ENCODE measurements at regions of chr10 and their contacts with region 1.

Region 1: DNA sequence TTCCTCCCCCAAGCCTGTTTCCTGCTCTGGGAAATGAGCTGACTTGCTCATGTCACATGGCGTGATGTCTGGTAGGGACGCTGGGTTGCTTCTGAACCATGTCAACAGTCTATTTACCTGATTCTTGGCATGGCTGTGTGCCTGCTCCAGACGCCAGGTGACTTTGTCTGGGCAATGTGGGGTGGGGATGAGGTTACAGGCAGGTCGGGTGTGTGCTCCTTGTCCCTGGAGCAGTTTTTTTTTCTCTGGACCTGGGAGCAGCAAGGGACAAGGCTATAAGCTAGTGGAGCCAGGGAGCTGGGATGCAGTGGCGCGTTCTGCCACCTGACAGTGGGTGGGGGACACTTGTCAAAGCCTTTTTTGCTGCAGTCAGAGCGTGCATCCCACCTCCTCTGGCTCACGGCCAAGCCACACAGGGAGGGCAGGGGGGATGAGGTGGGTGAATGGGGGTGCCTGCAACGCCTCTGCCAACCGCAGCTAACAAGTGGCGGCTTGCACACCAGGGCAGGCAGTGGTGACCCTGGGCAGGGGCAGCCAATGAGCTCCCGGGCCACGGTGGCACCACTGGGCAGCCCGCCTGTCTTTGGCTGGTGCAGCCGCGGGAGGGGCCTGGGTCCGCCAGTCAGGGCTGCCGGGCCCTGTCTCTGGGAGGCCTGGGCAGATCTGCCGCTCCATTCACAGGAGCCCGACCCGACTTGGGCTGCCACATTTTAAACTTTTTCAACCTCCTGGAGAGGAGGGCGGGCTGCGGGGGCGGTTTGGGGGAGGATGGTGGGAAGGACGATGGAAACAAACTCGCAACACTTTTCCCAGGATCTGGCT is 22.9 kb downstream of the DNAJB12 start:
- DNase-seq: peak; percentile 77 to 95 (median 85)
- ATAC-seq: peak; percentile 65
- H3K4me3 ChIP-seq: peak overlapping the region; percentile 24
- H3K4me3 Mint-ChIP-seq: peak overlapping the region; percentile 76
- H3K27ac ChIP-seq: peak overlapping the region; percentile 30 to 71
- H3K27ac Mint-ChIP-seq: peak overlapping the region; percentile 94
- H3K4me1 ChIP-seq: peaks cover 100% of the 10 kb centered on the region
- H3K4me1 Mint-ChIP-seq: peaks cover 91% of the 10 kb centered on the region
- H3K27me3 ChIP-seq: no peaks in the 10 kb centered on the region
- H3K27me3 Mint-ChIP-seq: no peaks in the 10 kb centered on the region
- CTCF ChIP-seq: peak; percentile 12

Region 2: GRCh38 chr10:71957546-71958275 is 374.1 kb before region 1 on chr10:
- CTCF ChIA-PET with region 1: no interaction called
- POLR2A ChIA-PET with region 1: no interaction called
- intact Hi-C with region 1: loop called in 1 of 2 experiments (anchors 5 kb)
- DNase-seq: no peak
- ATAC-seq: no peak
- H3K4me3 ChIP-seq: no peak overlapping the region
- H3K4me3 Mint-ChIP-seq: no peak overlapping the region
- H3K27ac ChIP-seq: no peak overlapping the region
- H3K27ac Mint-ChIP-seq: no peak overlapping the region
- H3K4me1 ChIP-seq: no peaks in the 10 kb centered on the region
- H3K4me1 Mint-ChIP-seq: no peaks in the 10 kb centered on the region
- H3K27me3 ChIP-seq: peaks cover 1 to 7% of the 10 kb centered on the region in 2 experiments
- H3K27me3 Mint-ChIP-seq: peaks cover 22% of the 10 kb centered on the region
- CTCF ChIP-seq: no peak

Region 3: GRCh38 chr10:72009411-72010081 is 322.3 kb before region 1 on chr10:
- CTCF ChIA-PET with region 1: no interaction called
- POLR2A ChIA-PET with region 1: no interaction called
- intact Hi-C with region 1: no loop called
- DNase-seq: no peak
- ATAC-seq: no peak
- H3K4me3 ChIP-seq: no peak overlapping the region
- H3K4me3 Mint-ChIP-seq: no peak overlapping the region
- H3K27ac ChIP-seq: no peak overlapping the region
- H3K27ac Mint-ChIP-seq: no peak overlapping the region
- H3K4me1 ChIP-seq: no peaks in the 10 kb centered on the region
- H3K4me1 Mint-ChIP-seq: no peaks in the 10 kb centered on the region
- H3K27me3 ChIP-seq: no peaks in the 10 kb centered on the region
- H3K27me3 Mint-ChIP-seq: no peaks in the 10 kb centered on the region
- CTCF ChIP-seq: no peak

Region 4: DNA sequence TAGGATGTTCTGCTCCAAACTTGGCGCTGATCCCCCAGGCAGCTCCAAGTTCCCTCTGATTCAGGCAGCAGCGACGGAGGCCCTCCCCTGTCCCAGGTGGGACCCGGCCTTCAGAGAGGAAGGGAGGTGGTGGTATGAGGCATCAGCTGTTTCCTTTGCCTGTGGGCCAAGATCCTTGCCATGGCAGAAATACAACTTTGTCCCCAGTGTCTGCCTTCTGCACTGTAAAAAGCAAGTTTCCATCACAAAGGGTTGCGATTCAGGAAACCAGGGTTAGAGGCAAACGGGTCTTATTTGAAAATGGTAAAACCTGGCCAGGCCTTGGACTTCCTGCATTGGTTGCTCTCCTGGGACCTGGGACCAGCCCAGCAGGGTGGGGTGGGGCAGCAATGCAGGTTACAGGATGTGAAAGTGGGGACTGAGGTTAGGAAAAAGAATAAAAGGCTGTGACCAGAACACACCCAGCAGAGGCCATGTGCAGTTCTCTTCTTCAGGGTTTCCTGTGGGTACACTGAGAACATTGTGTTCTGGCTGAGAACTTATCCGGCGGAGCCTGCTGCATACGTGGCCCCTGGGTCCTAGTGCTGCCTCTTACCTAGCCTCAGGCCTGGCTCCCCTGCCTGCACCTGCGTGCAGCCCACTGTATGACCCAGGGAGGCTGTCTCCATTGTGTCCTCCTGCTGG is 83.2 kb before region 1 on chr10:
- CTCF ChIA-PET with region 1: interaction called, 13 read pairs
- POLR2A ChIA-PET with region 1: interaction called, 14 read pairs
- intact Hi-C with region 1: loop called (anchors 1 to 5 kb)
- DNase-seq: peak; percentile 54 to 96 (median 64)
- ATAC-seq: peak; percentile 87
- H3K4me3 ChIP-seq: peak overlapping the region; percentile 31
- H3K4me3 Mint-ChIP-seq: peak overlapping the region; percentile 85
- H3K27ac ChIP-seq: peak overlapping the region; percentile 20 to 62
- H3K27ac Mint-ChIP-seq: peak overlapping the region; percentile 96
- H3K4me1 ChIP-seq: peaks cover 99% of the 10 kb centered on the region
- H3K4me1 Mint-ChIP-seq: peaks cover 86% of the 10 kb centered on the region
- H3K27me3 ChIP-seq: no peaks in the 10 kb centered on the region
- H3K27me3 Mint-ChIP-seq: no peaks in the 10 kb centered on the region
- CTCF ChIP-seq: no peak

Region 5: DNA sequence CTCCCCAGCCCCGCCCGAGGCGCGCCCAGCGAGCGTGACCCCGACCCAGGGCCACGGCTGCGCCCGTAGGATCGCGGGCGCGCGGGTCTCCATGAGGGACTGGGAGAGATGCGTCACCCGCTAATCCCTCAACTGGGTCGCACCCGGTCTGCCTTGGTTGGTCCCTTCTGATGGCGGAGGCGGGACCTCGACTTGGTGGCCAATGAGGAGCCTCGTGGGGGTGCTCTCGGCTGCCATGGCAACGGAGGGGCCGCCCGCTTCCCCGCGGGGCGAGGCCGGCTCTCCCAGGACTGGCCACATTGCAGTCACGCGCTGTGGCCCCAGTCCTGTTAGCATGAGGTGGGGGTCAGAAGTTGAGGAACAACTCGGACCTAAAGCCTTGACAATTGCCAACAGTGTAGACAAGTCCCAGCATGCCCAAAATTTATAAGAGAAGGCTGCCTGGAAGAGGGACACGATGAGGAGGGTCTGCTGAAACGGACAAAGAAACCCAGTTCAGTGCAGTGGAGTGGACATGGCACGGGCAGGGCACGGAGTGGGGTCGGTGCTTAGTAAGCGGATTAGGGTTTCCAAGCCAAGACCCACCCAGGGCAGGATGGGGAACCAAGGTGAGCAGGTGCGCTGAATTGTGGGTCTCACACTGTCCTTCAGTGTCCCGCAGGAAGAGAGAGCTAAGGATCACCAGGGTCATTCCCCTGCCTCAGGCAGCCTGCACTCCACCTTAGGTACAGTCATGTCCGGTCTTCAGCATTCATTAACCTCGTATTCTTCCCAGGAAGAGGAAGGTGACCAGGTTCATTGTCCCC is 33.6 kb before region 1 on chr10:
- CTCF ChIA-PET with region 1: interaction called, 8 read pairs
- POLR2A ChIA-PET with region 1: interaction called, 38 read pairs
- intact Hi-C with region 1: loop called in 1 of 2 experiments (anchors 1 kb)
- DNase-seq: peak; percentile 68 to 97 (median 83)
- ATAC-seq: peak; percentile 57
- H3K4me3 ChIP-seq: peak overlapping the region; percentile 75
- H3K4me3 Mint-ChIP-seq: peak overlapping the region; percentile 82
- H3K27ac ChIP-seq: peak overlapping the region; percentile 89 to 98
- H3K27ac Mint-ChIP-seq: peak overlapping the region; percentile 96
- H3K4me1 ChIP-seq: peaks cover 56% of the 10 kb centered on the region
- H3K4me1 Mint-ChIP-seq: peaks cover 63% of the 10 kb centered on the region
- H3K27me3 ChIP-seq: no peaks in the 10 kb centered on the region
- H3K27me3 Mint-ChIP-seq: no peaks in the 10 kb centered on the region
- CTCF ChIP-seq: no peak

Region 6: GRCh38 chr10:72525277-72525676 is 193.5 kb after region 1 on chr10:
- CTCF ChIA-PET with region 1: no interaction called
- POLR2A ChIA-PET with region 1: no interaction called
- intact Hi-C with region 1: no loop called
- DNase-seq: no peak
- ATAC-seq: no peak
- H3K4me3 ChIP-seq: no peak overlapping the region
- H3K4me3 Mint-ChIP-seq: no peak overlapping the region
- H3K27ac ChIP-seq: no peak overlapping the region
- H3K27ac Mint-ChIP-seq: no peak overlapping the region
- H3K4me1 ChIP-seq: no peaks in the 10 kb centered on the region
- H3K4me1 Mint-ChIP-seq: no peaks in the 10 kb centered on the region
- H3K27me3 ChIP-seq: no peaks in the 10 kb centered on the region
- H3K27me3 Mint-ChIP-seq: no peaks in the 10 kb centered on the region
- CTCF ChIP-seq: no peak